SK-N-SH (cell line): ENCODE measurements at regions of chr2 and their contacts with region 1.

Region 1: DNA sequence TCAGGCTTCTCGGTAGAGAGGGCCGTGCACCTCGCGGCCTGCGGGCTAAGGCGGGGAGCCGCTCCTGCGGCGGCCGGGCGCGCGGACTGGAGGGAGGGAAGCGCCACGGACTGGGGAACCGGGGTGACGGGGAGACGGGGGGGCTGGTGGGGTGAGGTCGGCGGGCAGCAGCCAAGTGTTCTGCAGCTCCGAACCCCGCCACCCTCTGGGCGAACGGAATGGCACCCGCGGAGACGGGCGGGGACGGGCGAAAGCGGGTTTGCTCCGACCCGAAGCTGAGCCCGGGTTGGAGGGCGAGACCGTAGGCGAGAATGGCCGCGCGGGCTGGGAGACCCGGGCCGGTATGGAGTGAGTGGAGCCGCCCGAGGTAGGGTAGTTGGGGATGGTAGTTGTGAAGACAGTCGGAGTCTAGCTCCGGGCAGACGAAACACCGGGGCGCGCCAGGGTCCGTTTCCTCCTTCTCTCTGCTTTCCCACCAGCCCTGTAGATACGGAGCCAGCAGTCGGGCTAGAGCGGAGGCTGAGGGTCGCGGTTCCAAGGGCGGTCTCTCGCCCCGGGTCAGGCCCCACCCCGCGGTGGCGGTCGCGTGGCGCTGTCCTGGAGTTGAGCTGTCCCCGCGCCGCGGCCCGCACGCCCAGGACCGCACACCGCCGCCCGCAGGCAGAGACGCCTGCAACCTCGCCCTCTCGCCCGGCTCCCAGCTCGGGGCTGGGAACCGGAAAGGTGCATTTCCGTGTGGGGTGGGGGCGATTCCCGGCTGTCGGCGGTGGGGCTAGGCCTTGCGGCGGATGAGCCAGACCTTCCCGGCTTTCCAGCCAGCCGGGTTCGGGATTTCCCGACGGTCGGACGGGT is 160.3 kb upstream of the SIX2 start:
- DNase-seq: peak; percentile 89
- H3K4me3 ChIP-seq: peak overlapping the region; percentile 54 to 62
- H3K27ac ChIP-seq: no peak overlapping the region; a peak in 1 of 4 replicates
- H3K4me1 ChIP-seq: peaks cover 14% of the 10 kb centered on the region in 2 experiments
- H3K27me3 ChIP-seq: no peaks in the 10 kb centered on the region
- CTCF ChIP-seq: no peak
- EP300 ChIP-seq: no peak
- RAD21 ChIP-seq: no peak

Region 2: DNA sequence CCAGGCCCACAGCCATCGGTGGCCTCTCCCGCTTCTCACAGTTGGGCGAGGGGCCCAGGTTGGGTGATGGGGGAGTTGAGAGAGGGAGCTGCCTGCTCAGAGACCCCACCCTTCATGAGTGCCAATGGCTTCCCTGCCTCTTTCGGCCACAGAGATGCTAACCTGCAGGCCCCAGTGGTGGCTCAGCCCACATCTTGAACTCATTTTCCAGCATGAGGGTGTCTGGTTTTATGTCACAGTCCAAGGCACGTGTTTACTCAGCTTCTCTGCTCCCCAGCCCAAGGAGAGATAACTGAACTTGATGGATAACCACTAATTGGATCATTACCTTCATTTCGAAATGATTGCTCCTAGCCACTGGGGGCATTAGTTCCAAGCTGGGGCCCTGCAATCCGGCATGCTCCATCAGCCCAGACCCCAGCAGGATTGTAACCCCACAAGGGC is 114.4 kb before region 1 on chr2:
- CTCF ChIA-PET with region 1: interaction called, 10 read pairs
- POLR2A ChIA-PET with region 1: interaction called, 3 read pairs
- DNase-seq: peak; percentile 90
- H3K4me3 ChIP-seq: no peak overlapping the region
- H3K27ac ChIP-seq: peak overlapping the region in 1 of 2 experiments; percentile 64; a peak in 2 of 4 replicates
- H3K4me1 ChIP-seq: peaks cover 0 to 31% of the 10 kb centered on the region in 2 experiments; a peak in 2 of 4 replicates
- H3K27me3 ChIP-seq: no peaks in the 10 kb centered on the region
- CTCF ChIP-seq: no peak
- EP300 ChIP-seq: peak in 1 of 2 experiments; percentile 97; a peak in 2 of 4 replicates
- RAD21 ChIP-seq: peak; percentile 60

Region 3: GRCh38 chr2:45093181-45093580 is 76.4 kb before region 1 on chr2:
- CTCF ChIA-PET with region 1: no interaction called
- POLR2A ChIA-PET with region 1: no interaction called
- DNase-seq: no peak
- H3K4me3 ChIP-seq: no peak overlapping the region
- H3K27ac ChIP-seq: no peak overlapping the region
- H3K4me1 ChIP-seq: no peaks in the 10 kb centered on the region
- H3K27me3 ChIP-seq: no peaks in the 10 kb centered on the region
- CTCF ChIP-seq: no peak
- EP300 ChIP-seq: no peak
- RAD21 ChIP-seq: no peak

Region 4: DNA sequence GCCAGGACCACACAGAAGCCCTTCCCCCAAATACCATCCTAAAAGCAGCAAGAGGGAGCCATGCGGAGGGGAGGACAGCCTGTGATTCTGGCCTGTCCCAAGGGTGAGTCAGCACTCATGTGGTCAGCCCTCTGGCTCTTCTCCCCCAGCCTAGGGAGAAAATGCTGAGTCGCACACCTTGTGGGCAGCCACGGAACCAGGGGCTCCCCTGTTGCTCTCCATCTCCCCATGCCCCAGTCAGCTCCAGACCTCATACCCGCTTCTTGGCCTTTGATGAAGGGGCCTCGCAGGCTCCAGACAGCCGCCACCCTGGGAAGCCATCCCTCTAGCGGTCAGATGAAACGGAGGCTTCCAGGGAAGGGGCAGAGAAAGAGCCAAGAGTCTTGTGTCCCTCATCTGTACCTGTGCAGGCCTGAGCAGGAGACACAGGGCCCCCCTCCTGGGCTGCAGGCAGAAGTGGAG is 20.9 kb after region 1 on chr2:
- CTCF ChIA-PET with region 1: interaction called, 6 read pairs
- POLR2A ChIA-PET with region 1: interaction called, 11 read pairs
- DNase-seq: peak; percentile 28
- H3K4me3 ChIP-seq: no peak overlapping the region
- H3K27ac ChIP-seq: peak overlapping the region in 1 of 2 experiments; percentile 90; a peak in 2 of 4 replicates
- H3K4me1 ChIP-seq: peaks cover 0 to 19% of the 10 kb centered on the region in 2 experiments; a peak in 2 of 4 replicates
- H3K27me3 ChIP-seq: no peaks in the 10 kb centered on the region
- CTCF ChIP-seq: no peak
- EP300 ChIP-seq: no peak
- RAD21 ChIP-seq: no peak